ENCODE measurements at regions of chr2 and their contacts with region 1.

Region 1: DNA sequence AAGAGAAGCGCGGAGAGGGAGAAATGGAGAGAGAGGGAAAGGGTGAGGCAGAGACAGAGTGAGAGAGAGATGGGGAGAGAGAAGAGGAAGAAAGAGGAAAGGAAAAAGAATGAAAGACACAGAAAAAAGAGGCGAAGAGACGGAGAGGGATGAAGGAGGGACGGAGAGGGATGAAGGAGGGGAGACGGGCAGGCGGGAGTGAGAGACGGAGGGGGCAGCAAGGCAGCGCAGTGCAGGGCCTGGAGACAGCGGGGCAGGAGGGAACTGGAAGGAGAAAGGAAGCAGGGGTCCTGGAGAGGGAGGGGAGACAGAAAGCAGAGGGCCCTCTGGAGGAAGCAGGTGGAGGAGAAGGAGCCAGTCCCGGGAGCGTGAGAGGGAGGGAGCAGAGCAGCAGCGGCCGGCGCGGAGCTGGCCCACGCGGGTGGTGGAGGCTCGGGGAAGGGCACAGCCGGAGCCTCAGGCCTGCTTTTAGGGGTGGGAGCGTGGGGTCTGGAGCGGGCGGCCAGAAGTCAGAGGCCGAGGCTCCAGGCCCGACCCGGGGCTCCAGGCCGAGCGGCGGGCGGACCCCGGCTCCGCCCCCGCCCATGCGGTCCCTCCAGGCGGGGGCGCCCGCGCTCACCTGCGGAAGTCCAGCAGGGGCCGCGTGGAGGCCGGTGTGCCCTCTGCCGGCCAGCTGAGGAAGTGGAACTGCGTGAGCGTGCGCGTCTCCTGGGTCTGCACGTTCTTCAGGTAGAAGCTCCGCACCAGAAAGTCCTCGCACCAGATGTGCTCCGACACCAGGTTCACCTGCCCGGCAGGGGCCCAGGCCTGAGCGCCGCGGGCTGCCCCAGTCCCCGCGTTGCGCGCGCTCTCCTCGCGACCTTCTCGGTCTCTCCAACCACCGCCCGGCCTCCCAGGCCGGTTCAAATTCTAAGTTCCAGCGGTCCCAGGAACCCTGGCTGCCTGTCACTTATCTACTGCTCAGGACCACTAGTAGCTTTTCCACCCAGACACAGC is 14.5 kb downstream of the PTPRN start:
- DNase-seq: peak; percentile 78 to 96 (median 88)
- ATAC-seq: peak; percentile 94
- H3K4me3 ChIP-seq: peak overlapping the region; percentile 55
- H3K4me3 Mint-ChIP-seq: peak overlapping the region; percentile 67
- H3K27ac ChIP-seq: no peak overlapping the region
- H3K27ac Mint-ChIP-seq: peak overlapping the region; percentile 14
- H3K4me1 ChIP-seq: peaks cover 33% of the 10 kb centered on the region
- H3K4me1 Mint-ChIP-seq: peaks cover 32% of the 10 kb centered on the region
- H3K27me3 ChIP-seq: peaks cover 0 to 3% of the 10 kb centered on the region in 2 experiments
- H3K27me3 Mint-ChIP-seq: peaks cover 7% of the 10 kb centered on the region
- CTCF ChIP-seq: peak; percentile 99

Region 2: DNA sequence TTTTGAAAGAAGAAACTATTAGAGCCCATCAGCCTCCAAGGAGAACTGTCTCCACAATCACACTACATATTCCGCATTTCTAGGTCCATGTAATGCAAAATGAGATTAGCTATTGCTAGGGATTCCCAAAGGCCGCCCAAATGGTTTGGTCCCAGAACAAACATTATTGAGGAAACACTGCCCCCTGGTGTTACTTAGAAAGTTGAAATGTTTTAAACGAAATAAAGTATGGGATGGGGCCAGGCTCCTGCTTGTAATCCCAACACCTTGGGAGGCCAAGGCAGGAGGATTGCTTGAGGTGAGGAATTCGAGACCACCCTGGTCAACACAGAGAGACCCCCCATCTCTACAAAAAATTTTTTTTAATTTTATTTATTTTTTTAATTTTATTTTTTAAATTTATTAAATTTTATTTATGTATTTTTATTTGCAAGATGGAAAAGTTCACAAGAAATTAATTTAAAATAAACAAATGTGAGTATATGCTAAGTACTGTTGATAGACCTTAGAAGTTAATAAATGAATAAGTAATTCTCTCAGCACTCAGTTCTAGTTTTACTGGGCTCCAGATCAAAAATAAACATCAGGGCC is 139.5 kb before region 1 on chr2:
- CTCF ChIA-PET with region 1: interaction called, 29 read pairs
- POLR2A ChIA-PET with region 1: interaction called, 12 read pairs
- intact Hi-C with region 1: loop called (anchors 1 kb)
- DNase-seq: peak in 5 of 14 experiments; percentile 18 to 84 (median 75)
- ATAC-seq: peak; percentile 21
- H3K4me3 ChIP-seq: no peak overlapping the region
- H3K4me3 Mint-ChIP-seq: no peak overlapping the region
- H3K27ac ChIP-seq: no peak overlapping the region
- H3K27ac Mint-ChIP-seq: no peak overlapping the region
- H3K4me1 ChIP-seq: peaks cover 7% of the 10 kb centered on the region
- H3K4me1 Mint-ChIP-seq: peaks cover 13% of the 10 kb centered on the region
- H3K27me3 ChIP-seq: no peaks in the 10 kb centered on the region
- H3K27me3 Mint-ChIP-seq: no peaks in the 10 kb centered on the region
- CTCF ChIP-seq: peak; percentile 78

Region 3: GRCh38 chr2:219171231-219171651 is 123.4 kb before region 1 on chr2:
- CTCF ChIA-PET with region 1: interaction called, 20 read pairs
- POLR2A ChIA-PET with region 1: interaction called, 26 read pairs
- intact Hi-C with region 1: loop called in 1 of 2 experiments (anchors 5 kb)
- DNase-seq: peak in 7 of 14 experiments; percentile 5 to 69 (median 53)
- ATAC-seq: peak; percentile 62
- H3K4me3 ChIP-seq: no peak overlapping the region
- H3K4me3 Mint-ChIP-seq: no peak overlapping the region
- H3K27ac ChIP-seq: peak overlapping the region in 1 of 2 donors; percentile 4
- H3K27ac Mint-ChIP-seq: peak overlapping the region; percentile 69
- H3K4me1 ChIP-seq: peaks cover 42% of the 10 kb centered on the region
- H3K4me1 Mint-ChIP-seq: peaks cover 35% of the 10 kb centered on the region
- H3K27me3 ChIP-seq: no peaks in the 10 kb centered on the region
- H3K27me3 Mint-ChIP-seq: no peaks in the 10 kb centered on the region
- CTCF ChIP-seq: peak; percentile 79

Region 4: DNA sequence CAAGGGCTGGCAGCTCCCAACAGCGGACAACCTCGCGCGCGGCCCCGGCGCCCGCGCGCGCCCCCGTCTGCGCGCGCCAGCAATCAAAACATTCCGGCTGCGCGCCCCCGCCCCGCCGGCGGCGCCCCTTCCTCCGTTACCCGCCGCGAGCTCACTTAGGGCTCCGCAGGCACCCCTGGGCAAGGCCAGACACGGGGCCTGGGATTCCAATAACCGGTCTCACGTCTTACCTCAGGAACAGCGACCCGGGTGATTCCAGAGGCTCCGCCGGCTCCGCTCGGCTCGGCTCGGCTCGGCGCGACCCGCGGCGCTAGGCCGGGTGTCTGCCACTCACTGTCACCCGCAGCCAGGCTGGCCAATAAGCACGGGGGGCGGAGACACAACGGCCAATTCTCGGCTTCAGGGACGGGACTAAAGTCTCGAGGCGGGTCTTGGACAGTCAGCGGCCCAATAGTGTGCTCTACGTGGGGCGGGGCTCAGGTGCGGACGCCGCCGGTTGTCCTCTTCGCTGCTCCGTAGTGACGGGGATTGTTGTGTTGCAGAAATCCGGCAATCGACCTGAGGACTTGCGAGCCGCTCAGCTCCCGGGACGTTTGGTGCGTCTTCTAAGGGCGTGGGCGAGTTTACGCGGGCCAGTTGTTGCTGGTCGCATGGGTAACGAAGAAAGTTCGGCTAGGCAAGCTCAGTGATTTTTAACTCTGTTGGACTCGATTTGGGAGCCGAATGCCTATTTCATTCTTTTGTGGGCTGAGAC is 65.2 kb before region 1 on chr2 and contains the starts of genes ANKZF1 and ATG9A:
- CTCF ChIA-PET with region 1: interaction called, 42 read pairs
- POLR2A ChIA-PET with region 1: interaction called, 19 read pairs
- intact Hi-C with region 1: loop called (anchors 1 to 5 kb)
- DNase-seq: peak; percentile 95 to 99 (median 97)
- ATAC-seq: peak; percentile 94
- H3K4me3 ChIP-seq: peak within 1 kb of the TSS; percentile 76
- H3K4me3 Mint-ChIP-seq: peak within 1 kb of the TSS; percentile 96
- H3K27ac ChIP-seq: peak within 1 kb of the TSS; percentile 46 to 91
- H3K27ac Mint-ChIP-seq: peak within 1 kb of the TSS; percentile 99
- H3K4me1 ChIP-seq: peaks cover 49% of the 10 kb centered on the region
- H3K4me1 Mint-ChIP-seq: peaks cover 65% of the 10 kb centered on the region
- H3K27me3 ChIP-seq: no peaks in the 10 kb centered on the region
- H3K27me3 Mint-ChIP-seq: no peaks in the 10 kb centered on the region
- CTCF ChIP-seq: no peak
- total RNA-seq, gene ANKZF1: 128 to 135 TPM
- total RNA-seq, gene ATG9A: 105 to 106 TPM

Region 5: DNA sequence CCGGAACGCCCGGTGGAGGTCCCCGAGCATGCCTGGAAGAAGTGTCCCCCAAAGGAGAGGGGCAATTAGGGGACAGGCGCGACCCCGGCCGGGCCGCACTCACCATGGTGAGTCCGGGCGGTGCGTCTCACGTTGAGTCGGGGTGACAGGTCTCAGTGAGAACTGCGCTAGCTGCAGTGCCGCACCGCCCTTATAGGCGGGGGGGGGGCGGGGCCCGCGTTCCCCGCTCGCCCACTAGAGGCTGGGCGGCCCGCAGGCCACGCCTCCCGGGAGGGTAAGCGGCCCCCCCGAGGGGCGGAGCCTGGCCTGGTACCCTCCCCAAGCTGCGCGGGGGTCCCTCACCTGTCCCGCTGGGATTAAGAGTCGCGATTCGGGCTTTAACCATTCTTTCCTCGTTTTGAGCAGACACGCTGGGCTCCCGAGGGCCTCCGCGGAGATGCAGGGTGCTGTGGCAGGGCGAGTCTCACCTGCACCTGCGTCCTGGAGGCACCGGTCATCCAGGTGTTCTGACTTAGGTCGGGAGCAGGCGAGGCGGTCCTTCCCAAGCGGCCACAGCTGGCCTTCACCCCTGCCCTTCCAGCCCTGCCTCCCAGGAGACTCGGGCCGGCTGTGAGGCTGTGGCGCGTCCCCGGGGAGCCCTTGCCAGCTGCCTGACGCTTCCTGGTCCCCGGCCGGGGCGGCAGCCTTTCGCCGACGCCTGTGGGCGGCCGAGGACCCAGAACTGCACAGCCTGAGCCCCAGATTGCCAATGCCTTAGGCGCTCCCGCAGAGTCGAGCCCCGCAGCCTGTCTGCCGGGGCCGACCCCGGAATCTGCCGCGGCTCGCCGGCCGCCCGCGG is 40.7 kb before region 1 on chr2 and contains the start of gene TUBA4A:
- CTCF ChIA-PET with region 1: interaction called, 97 read pairs
- POLR2A ChIA-PET with region 1: interaction called, 47 read pairs
- intact Hi-C with region 1: loop called in 1 of 2 experiments (anchors 2 kb)
- DNase-seq: peak; percentile 83 to 95 (median 90)
- ATAC-seq: peak; percentile 71
- H3K4me3 ChIP-seq: peak within 1 kb of the TSS; percentile 88
- H3K4me3 Mint-ChIP-seq: peak within 1 kb of the TSS; percentile 88
- H3K27ac ChIP-seq: peak within 1 kb of the TSS; percentile 73 to 87
- H3K27ac Mint-ChIP-seq: peak within 1 kb of the TSS; percentile 96
- H3K4me1 ChIP-seq: peaks cover 49% of the 10 kb centered on the region
- H3K4me1 Mint-ChIP-seq: peaks cover 49% of the 10 kb centered on the region
- H3K27me3 ChIP-seq: no peaks in the 10 kb centered on the region
- H3K27me3 Mint-ChIP-seq: no peaks in the 10 kb centered on the region
- CTCF ChIP-seq: no peak
- total RNA-seq, gene TUBA4A: 183 to 185 TPM

Region 6: GRCh38 chr2:219306047-219306446 is 11.4 kb after region 1 on chr2:
- CTCF ChIA-PET with region 1: no interaction called
- POLR2A ChIA-PET with region 1: no interaction called
- intact Hi-C with region 1: no loop called
- DNase-seq: no peak
- ATAC-seq: no peak
- H3K4me3 ChIP-seq: no peak overlapping the region
- H3K4me3 Mint-ChIP-seq: no peak overlapping the region
- H3K27ac ChIP-seq: no peak overlapping the region
- H3K27ac Mint-ChIP-seq: no peak overlapping the region
- H3K4me1 ChIP-seq: peaks cover 3% of the 10 kb centered on the region
- H3K4me1 Mint-ChIP-seq: no peaks in the 10 kb centered on the region
- H3K27me3 ChIP-seq: peaks cover 37 to 50% of the 10 kb centered on the region in 2 experiments
- H3K27me3 Mint-ChIP-seq: peaks cover 77% of the 10 kb centered on the region
- CTCF ChIP-seq: no peak

Region 7: DNA sequence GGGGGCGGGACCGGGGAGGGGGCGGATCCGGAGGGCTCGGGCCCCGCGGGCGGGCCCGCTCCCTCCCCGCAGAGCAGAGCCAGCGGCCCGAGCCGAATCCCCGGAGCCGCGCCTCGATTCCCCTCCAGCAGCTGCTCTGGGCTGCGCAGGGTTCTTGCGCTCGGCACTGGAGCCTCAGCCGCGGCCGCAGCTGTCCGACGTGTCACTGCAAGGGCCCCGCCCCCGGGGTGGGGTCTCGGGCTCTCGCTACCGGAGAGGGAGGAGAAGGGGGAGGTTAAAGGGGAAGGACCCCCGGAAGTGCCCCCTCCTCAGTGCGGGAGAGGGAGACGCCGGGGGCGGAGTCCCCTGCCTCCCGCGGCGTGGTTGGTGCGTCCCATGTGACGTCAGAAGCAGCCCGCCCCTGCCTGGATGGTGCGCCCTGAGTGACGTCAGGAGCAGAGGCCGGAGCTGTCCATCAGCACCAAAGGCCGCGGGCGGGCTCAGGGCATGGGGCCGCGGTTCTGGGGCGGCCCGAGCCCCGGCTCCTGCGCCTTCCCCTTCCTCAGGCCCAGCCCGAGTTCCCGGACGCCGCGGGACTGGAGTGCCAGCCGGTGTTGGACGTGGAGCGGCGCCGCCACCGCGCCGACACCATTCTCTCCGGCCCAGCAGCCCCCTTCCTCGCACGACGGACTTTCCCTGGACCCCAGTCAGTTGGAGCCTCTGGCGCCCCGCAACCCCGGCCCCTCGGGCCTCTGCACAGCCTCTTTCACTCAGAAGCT is 249.1 kb after region 1 on chr2 and contains the starts of genes CHPF and TMEM198:
- CTCF ChIA-PET with region 1: no interaction called
- POLR2A ChIA-PET with region 1: no interaction called
- intact Hi-C with region 1: loop called in 1 of 2 experiments (anchors 10 kb)
- DNase-seq: peak; percentile 83 to 97 (median 90)
- ATAC-seq: peak; percentile 69
- H3K4me3 ChIP-seq: peak within 1 kb of the TSS; percentile 72
- H3K4me3 Mint-ChIP-seq: peak within 1 kb of the TSS; percentile 86
- H3K27ac ChIP-seq: peak within 1 kb of the TSS; percentile 54 to 60
- H3K27ac Mint-ChIP-seq: peak within 1 kb of the TSS; percentile 75
- H3K4me1 ChIP-seq: peaks cover 32% of the 10 kb centered on the region
- H3K4me1 Mint-ChIP-seq: peaks cover 22% of the 10 kb centered on the region
- H3K27me3 ChIP-seq: no peaks in the 10 kb centered on the region
- H3K27me3 Mint-ChIP-seq: peaks cover 7% of the 10 kb centered on the region
- CTCF ChIP-seq: no peak
- total RNA-seq, gene CHPF: 6.5 to 7.1 TPM
- total RNA-seq, gene TMEM198: 0.47 to 0.91 TPM